ENCODE measurements at regions of chr9 and their contacts with region 1.

Region 1: DNA sequence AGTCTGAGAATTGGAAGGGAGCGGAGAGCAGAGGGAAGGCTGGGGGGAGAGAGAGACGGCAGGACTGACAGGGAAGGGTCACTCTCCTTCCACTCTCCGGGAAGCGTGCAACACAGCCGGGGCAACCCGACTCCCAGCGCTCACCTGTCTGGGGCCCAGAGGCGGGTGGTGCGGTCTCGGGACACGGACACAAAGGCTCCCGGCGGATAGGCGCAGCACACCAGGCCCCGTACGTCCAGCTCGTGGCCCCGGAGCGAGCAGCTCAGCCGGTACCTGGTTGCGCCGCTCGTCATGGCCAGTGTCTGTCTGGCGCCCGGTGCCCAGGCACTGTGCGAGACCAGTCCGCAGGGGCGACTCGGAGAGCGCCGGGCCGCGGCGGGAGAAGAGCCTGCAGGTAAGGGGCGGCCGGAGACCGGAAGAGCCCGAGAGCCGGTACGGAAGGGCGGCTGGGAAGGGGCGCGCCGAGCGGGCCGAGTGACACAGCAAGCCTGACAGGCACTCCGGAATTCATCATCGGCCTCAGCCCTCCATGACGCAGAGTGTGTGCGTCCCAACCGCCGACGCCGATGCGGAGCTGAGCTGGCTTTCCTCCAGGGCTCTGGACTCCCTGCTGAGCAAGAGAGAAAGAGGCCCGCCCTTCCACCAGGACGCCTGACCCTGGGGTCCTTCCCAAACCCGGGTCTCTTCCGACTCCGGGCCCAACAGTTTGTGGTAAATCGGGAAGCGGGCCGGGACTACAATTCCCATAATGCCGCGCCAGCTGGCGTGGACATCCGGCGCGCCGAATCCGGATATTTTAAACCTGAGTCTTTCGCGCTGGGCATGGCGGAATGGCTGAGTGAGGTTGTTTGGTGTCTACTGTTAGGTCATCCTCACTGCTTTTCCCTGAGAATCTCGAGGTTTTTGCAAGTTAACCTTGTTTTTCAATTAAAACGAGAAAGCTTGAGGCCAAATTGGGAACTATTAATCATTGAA is at the start of gene PLAA:
- DNase-seq: peak; percentile 93 to 96
- ATAC-seq: peak; percentile 99
- H3K4me3 ChIP-seq: peak within 1 kb of the TSS; percentile 69 to 77
- H3K27ac ChIP-seq: peak within 1 kb of the TSS; percentile 38 to 86
- H3K4me1 ChIP-seq: peaks cover 3 to 4% of the 10 kb centered on the region in 2 donors
- H3K27me3 ChIP-seq: peaks cover 0 to 2% of the 10 kb centered on the region in 2 donors
- total RNA-seq, gene PLAA: 23.5 to 27.2 TPM

Region 2: DNA sequence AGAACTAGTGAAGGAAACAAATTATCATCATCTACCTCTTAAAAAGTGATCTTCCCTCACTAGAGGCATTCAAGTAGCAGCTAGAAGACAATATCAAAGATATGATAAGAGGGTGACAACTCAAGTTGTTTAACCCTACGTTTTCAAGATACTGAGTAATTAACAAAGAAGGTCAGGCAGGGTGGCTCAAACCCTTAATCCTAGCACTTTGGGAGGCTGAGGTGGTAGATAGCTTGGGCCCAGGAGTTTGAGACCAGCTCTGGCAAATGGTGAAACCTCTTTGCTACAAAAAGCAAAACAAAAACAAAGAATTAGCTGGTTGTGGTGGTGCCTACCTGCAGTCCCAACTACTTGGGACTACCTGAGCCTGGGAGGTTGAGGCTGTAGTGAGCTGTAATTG is 860.6 kb before region 1 on chr9:
- intact Hi-C with region 1: no loop called
- DNase-seq: no peak
- ATAC-seq: no peak
- H3K4me3 ChIP-seq: no peak overlapping the region
- H3K27ac ChIP-seq: no peak overlapping the region
- H3K4me1 ChIP-seq: no peaks in the 10 kb centered on the region
- H3K27me3 ChIP-seq: no peaks in the 10 kb centered on the region

Region 3: GRCh38 chr9:26850995-26851394 is 96.0 kb before region 1 on chr9:
- intact Hi-C with region 1: no loop called
- DNase-seq: no peak
- ATAC-seq: no peak
- H3K4me3 ChIP-seq: no peak overlapping the region
- H3K27ac ChIP-seq: no peak overlapping the region
- H3K4me1 ChIP-seq: no peaks in the 10 kb centered on the region
- H3K27me3 ChIP-seq: no peaks in the 10 kb centered on the region

Region 4: DNA sequence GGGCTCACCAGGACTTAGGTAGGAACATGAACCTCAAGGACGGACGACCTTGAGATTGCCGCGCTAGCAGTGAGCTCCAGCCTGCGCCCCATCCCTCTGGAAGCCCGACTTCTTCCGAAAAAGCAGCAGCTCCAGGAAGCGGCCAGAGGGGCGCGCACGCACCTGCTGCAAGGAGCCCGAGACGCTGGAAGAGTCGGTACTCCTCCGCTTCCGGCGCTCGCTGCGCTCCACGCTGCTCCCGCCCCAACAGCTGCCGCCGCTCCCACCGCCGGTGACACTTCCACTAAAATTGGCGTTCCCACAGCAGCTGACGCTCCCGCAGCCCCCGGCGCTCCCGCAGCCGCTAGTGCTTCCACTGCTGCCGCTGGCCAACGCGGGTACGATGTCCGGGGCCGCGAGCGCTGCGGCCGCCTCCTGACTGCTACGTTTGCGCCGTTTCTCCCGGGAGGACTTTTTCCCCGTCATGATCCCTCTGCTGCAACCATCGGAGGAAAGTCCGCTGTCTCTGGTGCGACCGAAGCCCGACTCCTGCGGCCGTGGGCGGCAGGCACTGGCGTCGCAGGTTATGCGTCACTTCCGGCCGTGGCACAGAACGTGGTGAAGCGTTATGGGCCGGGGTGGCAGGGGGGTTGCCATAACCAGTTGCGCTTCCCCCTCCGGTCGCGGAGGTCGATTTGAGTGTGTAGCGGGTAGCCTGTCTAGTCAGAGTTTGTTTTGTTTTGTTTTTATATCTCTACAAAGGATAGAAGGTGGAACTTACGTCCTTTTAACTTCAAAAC is 54.6 kb before region 1 on chr9 and contains the start of gene CAAP1:
- intact Hi-C with region 1: loop called in 1 of 2 experiments (anchors 2 kb)
- DNase-seq: peak; percentile 97 to 99
- ATAC-seq: peak; percentile 99
- H3K4me3 ChIP-seq: peak within 1 kb of the TSS; percentile 82 to 84
- H3K27ac ChIP-seq: peak within 1 kb of the TSS; percentile 76 to 96
- H3K4me1 ChIP-seq: peaks cover 0 to 2% of the 10 kb centered on the region in 2 donors
- H3K27me3 ChIP-seq: no peaks in the 10 kb centered on the region
- total RNA-seq, gene CAAP1: 12.3 to 13.2 TPM

Measured in aorta (tissue), 5 donors.